Activated T-helper 1 cell treated with anti-CD3 and anti-CD28 coated beads, Interleukin-12 subunit alpha, Interleukin-12 subunit beta, Interleukin-2, Interleukin-4 antibody, amounts not matched to agents 30 ng/mL and 10 ng/mL and 1 ng/mL, durations not matched to agents 14 hours and 24 hours and 36 hours (primary cell): ENCODE measurements at regions of chr1 and their contacts with region 1.

Region 1: DNA sequence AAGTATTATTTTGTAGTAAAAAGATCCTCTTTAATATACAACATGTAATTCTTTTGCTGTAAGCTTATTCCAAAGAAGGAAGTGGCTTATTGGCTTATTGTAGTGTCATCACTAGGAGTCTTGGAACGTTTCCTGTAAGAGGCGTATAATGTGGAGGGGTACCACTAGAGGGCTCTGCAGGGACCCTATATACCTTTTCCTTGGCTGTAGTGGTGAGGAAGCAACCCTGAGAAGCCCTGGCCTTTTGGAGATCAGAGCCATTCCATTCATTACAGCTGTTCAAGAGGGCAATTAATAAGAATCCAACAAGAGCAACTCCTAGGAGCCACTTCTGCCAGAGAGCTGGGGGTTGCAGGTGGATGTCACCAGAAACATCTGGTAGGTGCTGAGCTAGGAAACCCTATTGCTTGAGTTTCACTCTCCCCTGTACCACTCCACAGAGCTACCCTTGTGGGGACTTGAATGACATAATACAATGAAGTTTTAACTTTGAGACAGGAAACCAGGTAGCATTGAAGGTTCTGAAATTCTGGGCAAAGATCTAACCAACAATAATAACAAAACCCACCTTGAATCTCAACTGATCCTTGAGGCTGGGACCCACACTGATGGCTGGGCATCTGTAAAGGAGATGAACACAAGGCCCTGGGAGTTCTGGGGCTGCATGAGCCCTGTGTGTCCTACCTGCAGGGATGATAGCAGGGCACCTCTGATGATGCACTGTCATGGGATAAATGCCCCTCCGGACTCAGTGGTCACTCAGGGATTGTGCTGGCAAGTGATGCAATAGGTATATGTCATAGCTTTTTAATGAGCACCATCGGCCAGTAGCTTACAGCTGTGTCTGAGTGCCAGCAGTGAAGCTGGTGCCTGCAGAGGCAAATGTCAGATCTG is 160.2 kb upstream of the COA6 start:
- DNase-seq: no peak
- H3K4me3 Mint-ChIP-seq: peak overlapping the region; percentile 75
- H3K27ac Mint-ChIP-seq: no peak overlapping the region
- H3K4me1 Mint-ChIP-seq: peaks cover 35% of the 10 kb centered on the region
- H3K27me3 Mint-ChIP-seq: peaks cover 9% of the 10 kb centered on the region

Region 2: GRCh38 chr1:234154320-234155251 is 58.4 kb before region 1 on chr1:
- intact Hi-C with region 1: loop called (anchors 1 kb)
- DNase-seq: no peak
- H3K4me3 Mint-ChIP-seq: no peak overlapping the region
- H3K27ac Mint-ChIP-seq: no peak overlapping the region
- H3K4me1 Mint-ChIP-seq: no peaks in the 10 kb centered on the region
- H3K27me3 Mint-ChIP-seq: peaks cover 13% of the 10 kb centered on the region

Region 3: GRCh38 chr1:234230414-234230862 is 17.4 kb after region 1 on chr1:
- intact Hi-C with region 1: loop called (anchors 2 kb)
- DNase-seq: peak; percentile 13
- H3K4me3 Mint-ChIP-seq: peak overlapping the region; percentile 5
- H3K27ac Mint-ChIP-seq: peak overlapping the region; percentile 49
- H3K4me1 Mint-ChIP-seq: peaks cover 16% of the 10 kb centered on the region
- H3K27me3 Mint-ChIP-seq: peaks cover 40% of the 10 kb centered on the region

Region 4: GRCh38 chr1:234271243-234271606 is 58.2 kb after region 1 on chr1:
- intact Hi-C with region 1: loop called (anchors 2 kb)
- DNase-seq: no peak
- H3K4me3 Mint-ChIP-seq: no peak overlapping the region
- H3K27ac Mint-ChIP-seq: no peak overlapping the region
- H3K4me1 Mint-ChIP-seq: peaks cover 24% of the 10 kb centered on the region
- H3K27me3 Mint-ChIP-seq: peaks cover 7% of the 10 kb centered on the region

Region 5: GRCh38 chr1:234309598-234310459 is 96.8 kb after region 1 on chr1:
- intact Hi-C with region 1: loop called (anchors 1 kb)
- DNase-seq: peak; percentile 47
- H3K4me3 Mint-ChIP-seq: no peak overlapping the region
- H3K27ac Mint-ChIP-seq: peak overlapping the region; percentile 5
- H3K4me1 Mint-ChIP-seq: peaks cover 14% of the 10 kb centered on the region
- H3K27me3 Mint-ChIP-seq: peaks cover 1% of the 10 kb centered on the region

Region 6: GRCh38 chr1:234326497-234327366 is 113.7 kb after region 1 on chr1:
- intact Hi-C with region 1: loop called (anchors 1 kb)
- DNase-seq: peak; percentile 53
- H3K4me3 Mint-ChIP-seq: peak overlapping the region; percentile 60
- H3K27ac Mint-ChIP-seq: peak overlapping the region; percentile 33
- H3K4me1 Mint-ChIP-seq: peaks cover 34% of the 10 kb centered on the region
- H3K27me3 Mint-ChIP-seq: peaks cover 25% of the 10 kb centered on the region

Region 7: GRCh38 chr1:234400773-234401172 is 187.8 kb after region 1 on chr1:
- intact Hi-C with region 1: loop called (anchors 10 kb)
- DNase-seq: no peak
- H3K4me3 Mint-ChIP-seq: peak overlapping the region; percentile 50
- H3K27ac Mint-ChIP-seq: peak overlapping the region; percentile 70
- H3K4me1 Mint-ChIP-seq: peaks cover 60% of the 10 kb centered on the region
- H3K27me3 Mint-ChIP-seq: peaks cover 2% of the 10 kb centered on the region